Activated CD8-positive, alpha-beta T cell treated with anti-CD3 and anti-CD28 coated beads, Interleukin-2, amount 10 ng/mL, durations not matched to agents 7 days and 5 days (primary cell): ENCODE measurements at regions of chr11 and their contacts with region 1.

Region 1: DNA sequence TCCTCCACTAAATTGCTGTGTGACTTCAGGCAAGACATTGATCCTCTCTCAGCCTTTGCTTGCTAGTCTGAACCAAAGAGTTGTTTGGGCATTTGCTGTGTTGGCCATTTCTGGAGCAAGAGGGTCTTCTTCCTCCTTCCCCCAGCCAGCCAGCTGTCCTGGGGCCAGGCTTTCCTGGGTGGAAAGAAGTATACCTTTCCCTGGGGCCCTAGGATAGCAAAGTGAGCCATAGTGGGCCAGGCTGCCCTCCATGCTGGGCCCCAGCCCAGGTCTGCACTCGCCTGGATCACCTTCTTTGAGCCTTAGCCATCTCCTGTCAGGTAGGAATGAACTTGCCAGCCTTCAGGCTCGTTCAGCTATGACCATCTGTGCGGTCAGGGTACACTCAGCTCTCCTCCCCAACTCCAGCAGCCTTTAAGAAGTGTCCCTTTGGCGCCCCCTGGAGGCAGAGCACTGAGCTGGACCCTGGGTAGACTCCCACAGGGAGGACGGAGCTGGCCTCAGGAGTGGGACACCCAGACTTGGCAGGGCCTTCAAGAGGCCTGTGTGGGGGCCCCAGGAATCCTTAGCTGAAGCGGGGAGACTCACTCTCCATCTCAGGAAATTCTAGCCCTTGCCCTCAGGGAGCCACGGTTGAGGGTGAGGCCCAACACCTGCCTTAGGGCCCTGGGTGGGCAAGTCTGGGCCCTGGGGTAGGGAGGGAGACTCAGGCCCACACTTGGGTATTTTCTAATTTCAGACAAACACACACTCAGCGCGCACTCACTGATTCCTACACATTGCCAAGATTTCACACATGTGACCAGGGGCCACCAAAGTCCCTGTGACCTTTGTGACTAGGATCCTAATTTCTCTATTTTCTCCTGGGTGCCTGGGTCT is 35.6 kb upstream of the TPBGL start:
- DNase-seq: peak; percentile 89
- ATAC-seq: peak; percentile 98
- H3K4me3 Mint-ChIP-seq: no peak overlapping the region
- H3K27ac Mint-ChIP-seq: no peak overlapping the region
- H3K4me1 Mint-ChIP-seq: no peaks in the 10 kb centered on the region
- H3K27me3 Mint-ChIP-seq: peaks cover 2% of the 10 kb centered on the region

Region 2: DNA sequence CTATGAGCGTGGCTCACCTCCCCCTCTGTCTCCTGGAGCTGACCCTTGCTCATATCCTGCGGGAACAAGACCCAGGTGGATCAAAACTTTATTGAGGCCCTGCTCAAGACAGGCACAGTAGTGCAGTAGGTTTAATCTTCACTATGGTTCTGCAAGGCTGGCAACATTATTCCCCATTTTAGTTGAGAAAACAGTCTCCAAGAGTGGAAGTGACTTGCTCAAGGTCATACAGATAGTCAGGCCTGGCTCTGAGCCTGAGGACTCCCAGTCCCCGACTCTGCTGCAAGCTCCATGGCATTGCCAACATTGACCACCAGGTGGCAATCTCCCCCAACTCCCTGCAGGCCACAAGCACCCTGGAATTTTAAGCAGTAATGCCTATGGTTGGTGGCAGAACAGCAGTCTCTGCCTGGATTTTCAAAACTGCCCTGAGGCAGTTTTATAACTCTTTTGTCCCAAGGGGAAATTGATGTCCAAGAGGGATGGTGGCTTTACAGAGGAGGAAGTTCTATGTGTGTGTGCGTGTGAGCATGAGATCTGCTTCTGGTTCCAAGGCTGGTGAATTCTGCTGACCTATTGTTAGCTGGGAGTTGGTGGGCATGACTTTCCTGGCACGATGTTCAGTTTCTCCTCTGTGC is 182.0 kb before region 1 on chr11:
- CTCF ChIA-PET with region 1: interaction called, 20 read pairs
- POLR2A ChIA-PET with region 1: interaction called, 3 read pairs
- DNase-seq: peak; percentile 81
- ATAC-seq: peak; percentile 90
- H3K4me3 Mint-ChIP-seq: no peak overlapping the region
- H3K27ac Mint-ChIP-seq: no peak overlapping the region
- H3K4me1 Mint-ChIP-seq: no peaks in the 10 kb centered on the region
- H3K27me3 Mint-ChIP-seq: no peaks in the 10 kb centered on the region

Region 3: DNA sequence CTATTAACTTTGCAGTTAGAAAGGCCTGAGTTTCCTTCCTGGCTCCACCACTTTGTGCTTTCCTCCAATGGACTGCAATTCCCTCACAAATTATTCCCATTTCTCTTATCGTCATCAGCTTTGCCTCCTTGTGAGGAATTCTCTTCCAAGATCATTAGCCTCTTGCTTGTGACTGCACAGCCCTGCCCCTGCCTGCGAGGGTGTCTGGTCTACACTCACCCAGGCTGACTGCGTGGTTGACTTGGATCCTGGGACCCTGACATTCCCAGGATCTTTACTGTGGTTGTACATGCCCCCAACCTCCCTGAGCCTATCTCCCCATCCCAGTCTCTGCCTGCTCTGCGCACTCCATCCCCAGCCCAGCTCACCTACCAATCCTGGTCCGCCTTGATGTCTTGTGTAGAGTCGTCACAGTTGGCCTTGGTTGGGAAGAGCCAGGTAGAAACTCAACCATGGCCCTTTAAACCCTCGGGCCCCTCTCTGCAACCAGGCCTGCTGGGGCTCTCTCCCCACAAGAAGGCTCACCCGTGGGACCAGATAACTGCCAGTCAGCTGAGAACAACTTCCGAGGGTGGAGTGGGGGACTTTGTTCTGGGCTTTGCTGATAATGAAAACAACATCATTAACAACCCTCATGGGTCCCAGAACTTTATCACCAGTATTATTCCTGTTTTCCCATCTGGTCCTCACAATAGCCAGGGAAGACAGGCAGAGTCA is 108.3 kb before region 1 on chr11 and contains the start of gene OR2AT4:
- CTCF ChIA-PET with region 1: no interaction called
- POLR2A ChIA-PET with region 1: no interaction called
- DNase-seq: no peak
- ATAC-seq: no peak
- H3K4me3 Mint-ChIP-seq: no peak within 1 kb of the TSS
- H3K27ac Mint-ChIP-seq: no peak within 1 kb of the TSS
- H3K4me1 Mint-ChIP-seq: no peaks in the 10 kb centered on the region
- H3K27me3 Mint-ChIP-seq: peaks cover 34% of the 10 kb centered on the region
- total RNA-seq, gene OR2AT4: not detected

Region 4: GRCh38 chr11:75150879-75151278 is 54.0 kb before region 1 on chr11 and contains the start of gene SLCO2B1:
- CTCF ChIA-PET with region 1: interaction called, 432 read pairs
- POLR2A ChIA-PET with region 1: no interaction called
- DNase-seq: no peak
- ATAC-seq: no peak
- H3K4me3 Mint-ChIP-seq: no peak within 1 kb of the TSS
- H3K27ac Mint-ChIP-seq: no peak within 1 kb of the TSS
- H3K4me1 Mint-ChIP-seq: peaks cover 27% of the 10 kb centered on the region
- H3K27me3 Mint-ChIP-seq: peaks cover 27% of the 10 kb centered on the region
- total RNA-seq, gene SLCO2B1: not detected

Region 5: GRCh38 chr11:75174781-75175370 is 30.0 kb before region 1 on chr11:
- CTCF ChIA-PET with region 1: interaction called, 10 read pairs
- POLR2A ChIA-PET with region 1: no interaction called
- DNase-seq: peak; percentile 70
- ATAC-seq: peak; percentile 90
- H3K4me3 Mint-ChIP-seq: peak overlapping the region; percentile 30
- H3K27ac Mint-ChIP-seq: peak overlapping the region; percentile 90
- H3K4me1 Mint-ChIP-seq: peaks cover 27% of the 10 kb centered on the region
- H3K27me3 Mint-ChIP-seq: peaks cover 11% of the 10 kb centered on the region

Region 6: DNA sequence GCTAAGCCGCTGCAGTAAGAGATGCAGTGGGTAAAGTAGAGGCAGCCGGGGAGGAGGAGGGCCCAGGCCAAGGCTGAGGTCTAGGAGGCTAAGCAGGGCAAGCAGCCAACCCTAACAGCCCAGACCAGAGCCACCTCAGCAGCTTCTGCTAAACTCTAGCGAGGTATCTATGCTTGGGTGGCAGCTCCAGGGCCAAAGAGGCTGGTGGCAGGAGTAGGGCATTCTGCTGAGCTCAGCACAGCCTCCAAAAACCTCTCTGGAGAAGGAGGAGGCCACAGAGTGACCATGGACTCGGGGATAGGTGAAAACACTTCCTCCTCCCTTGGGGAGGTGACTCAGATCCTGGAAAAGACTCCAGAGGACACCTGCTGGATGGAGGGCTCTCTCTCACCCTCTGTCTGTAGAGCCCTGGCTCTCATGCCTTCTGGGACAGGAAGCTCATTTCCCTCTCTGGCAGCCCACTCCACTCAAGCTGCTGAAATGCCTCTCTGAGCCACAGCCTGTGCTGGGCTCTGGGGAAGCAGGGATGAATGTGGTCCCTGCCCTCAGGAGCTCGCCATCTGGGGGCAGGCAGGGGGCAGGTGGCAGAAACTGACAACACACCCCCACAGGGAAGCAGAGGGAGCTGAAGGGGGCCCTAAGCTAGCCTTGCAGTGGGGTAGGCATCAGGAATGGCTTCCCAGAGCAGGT is 19.2 kb after region 1 on chr11:
- CTCF ChIA-PET with region 1: interaction called, 12 read pairs
- POLR2A ChIA-PET with region 1: interaction called, 3 read pairs
- DNase-seq: no peak
- ATAC-seq: no peak
- H3K4me3 Mint-ChIP-seq: no peak overlapping the region
- H3K27ac Mint-ChIP-seq: no peak overlapping the region
- H3K4me1 Mint-ChIP-seq: no peaks in the 10 kb centered on the region
- H3K27me3 Mint-ChIP-seq: peaks cover 8% of the 10 kb centered on the region

Region 7: GRCh38 chr11:75241036-75241905 is 36.3 kb after region 1 on chr11:
- CTCF ChIA-PET with region 1: interaction called, 22 read pairs
- POLR2A ChIA-PET with region 1: interaction called, 5 read pairs
- DNase-seq: peak; percentile 88
- ATAC-seq: peak; percentile 95
- H3K4me3 Mint-ChIP-seq: peak overlapping the region; percentile 70
- H3K27ac Mint-ChIP-seq: no peak overlapping the region
- H3K4me1 Mint-ChIP-seq: peaks cover 9% of the 10 kb centered on the region
- H3K27me3 Mint-ChIP-seq: peaks cover 54% of the 10 kb centered on the region